CD4-positive, alpha-beta memory T cell (primary cell): ENCODE measurements at regions of chr21 and their contacts with region 1.

Region 1: GRCh38 chr21:29989634-29990234 is 49.9 kb upstream of the GRIK1 start:
- DNase-seq: no peak
- H3K4me3 ChIP-seq: no peak overlapping the region
- H3K4me3 Mint-ChIP-seq: no peak overlapping the region
- H3K27ac ChIP-seq: no peak overlapping the region
- H3K27ac Mint-ChIP-seq: no peak overlapping the region
- H3K4me1 ChIP-seq: no peaks in the 10 kb centered on the region
- H3K4me1 Mint-ChIP-seq: no peaks in the 10 kb centered on the region
- H3K27me3 ChIP-seq: no peaks in the 10 kb centered on the region
- H3K27me3 Mint-ChIP-seq: no peaks in the 10 kb centered on the region

Region 2: DNA sequence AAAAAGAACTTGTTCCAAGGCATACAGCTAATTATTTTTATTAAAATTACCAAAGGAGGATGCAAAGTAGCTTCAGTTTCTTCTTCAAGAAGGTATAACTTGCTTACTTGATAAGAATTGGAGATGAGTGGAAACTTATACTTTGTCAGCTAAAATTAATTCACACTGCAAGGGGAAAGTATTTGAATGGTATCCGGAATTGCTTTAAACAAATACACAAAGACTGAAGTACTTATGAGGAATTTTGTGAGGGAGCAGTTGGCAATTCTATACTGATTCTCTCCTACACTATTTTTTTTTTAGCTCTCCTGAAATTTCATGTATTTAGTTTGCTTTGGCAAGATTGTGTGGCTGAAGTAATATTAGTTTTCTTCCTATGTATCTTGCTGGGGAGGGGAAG is 10.7 kb before region 1 on chr21:
- CTCF ChIA-PET with region 1: no interaction called
- POLR2A ChIA-PET with region 1: no interaction called
- intact Hi-C with region 1: no loop called
- DNase-seq: no peak
- H3K4me3 ChIP-seq: no peak overlapping the region
- H3K4me3 Mint-ChIP-seq: no peak overlapping the region
- H3K27ac ChIP-seq: no peak overlapping the region
- H3K27ac Mint-ChIP-seq: no peak overlapping the region
- H3K4me1 ChIP-seq: no peaks in the 10 kb centered on the region
- H3K4me1 Mint-ChIP-seq: no peaks in the 10 kb centered on the region
- H3K27me3 ChIP-seq: no peaks in the 10 kb centered on the region
- H3K27me3 Mint-ChIP-seq: no peaks in the 10 kb centered on the region

Region 3: GRCh38 chr21:30014886-30015285 is 25.2 kb after region 1 on chr21:
- CTCF ChIA-PET with region 1: no interaction called
- POLR2A ChIA-PET with region 1: no interaction called
- intact Hi-C with region 1: loop called (anchors 1 kb)
- DNase-seq: no peak
- H3K4me3 ChIP-seq: no peak overlapping the region
- H3K4me3 Mint-ChIP-seq: no peak overlapping the region
- H3K27ac ChIP-seq: no peak overlapping the region
- H3K27ac Mint-ChIP-seq: no peak overlapping the region
- H3K4me1 ChIP-seq: no peaks in the 10 kb centered on the region
- H3K4me1 Mint-ChIP-seq: no peaks in the 10 kb centered on the region
- H3K27me3 ChIP-seq: no peaks in the 10 kb centered on the region
- H3K27me3 Mint-ChIP-seq: no peaks in the 10 kb centered on the region

Region 4: DNA sequence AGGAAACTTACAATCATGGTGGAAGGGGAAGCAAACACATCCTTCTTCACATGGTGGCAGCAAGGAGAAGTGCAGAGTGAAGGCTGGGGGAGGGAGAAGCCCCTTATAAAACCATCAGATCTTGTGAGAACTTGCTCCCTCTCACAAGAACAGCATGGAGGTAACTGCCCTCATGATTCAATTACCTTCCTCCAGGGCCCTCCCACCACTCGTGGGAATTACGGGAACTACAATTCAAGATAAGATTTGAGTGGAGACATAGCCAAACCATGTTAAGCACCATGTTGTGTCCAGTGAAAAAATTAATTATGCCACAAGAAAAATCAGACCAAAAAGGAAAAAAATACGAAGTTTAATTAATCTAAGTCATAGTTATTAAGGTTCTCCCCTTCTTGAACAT is 67.4 kb after region 1 on chr21:
- CTCF ChIA-PET with region 1: no interaction called
- POLR2A ChIA-PET with region 1: no interaction called
- intact Hi-C with region 1: no loop called
- DNase-seq: no peak
- H3K4me3 ChIP-seq: no peak overlapping the region
- H3K4me3 Mint-ChIP-seq: no peak overlapping the region
- H3K27ac ChIP-seq: no peak overlapping the region
- H3K27ac Mint-ChIP-seq: no peak overlapping the region
- H3K4me1 ChIP-seq: no peaks in the 10 kb centered on the region
- H3K4me1 Mint-ChIP-seq: no peaks in the 10 kb centered on the region
- H3K27me3 ChIP-seq: no peaks in the 10 kb centered on the region
- H3K27me3 Mint-ChIP-seq: peaks cover 0 to 1% of the 10 kb centered on the region in 2 donors